Natural killer cell (primary cell): ENCODE measurements at regions of chr15 and their contacts with region 1.

Region 1: DNA sequence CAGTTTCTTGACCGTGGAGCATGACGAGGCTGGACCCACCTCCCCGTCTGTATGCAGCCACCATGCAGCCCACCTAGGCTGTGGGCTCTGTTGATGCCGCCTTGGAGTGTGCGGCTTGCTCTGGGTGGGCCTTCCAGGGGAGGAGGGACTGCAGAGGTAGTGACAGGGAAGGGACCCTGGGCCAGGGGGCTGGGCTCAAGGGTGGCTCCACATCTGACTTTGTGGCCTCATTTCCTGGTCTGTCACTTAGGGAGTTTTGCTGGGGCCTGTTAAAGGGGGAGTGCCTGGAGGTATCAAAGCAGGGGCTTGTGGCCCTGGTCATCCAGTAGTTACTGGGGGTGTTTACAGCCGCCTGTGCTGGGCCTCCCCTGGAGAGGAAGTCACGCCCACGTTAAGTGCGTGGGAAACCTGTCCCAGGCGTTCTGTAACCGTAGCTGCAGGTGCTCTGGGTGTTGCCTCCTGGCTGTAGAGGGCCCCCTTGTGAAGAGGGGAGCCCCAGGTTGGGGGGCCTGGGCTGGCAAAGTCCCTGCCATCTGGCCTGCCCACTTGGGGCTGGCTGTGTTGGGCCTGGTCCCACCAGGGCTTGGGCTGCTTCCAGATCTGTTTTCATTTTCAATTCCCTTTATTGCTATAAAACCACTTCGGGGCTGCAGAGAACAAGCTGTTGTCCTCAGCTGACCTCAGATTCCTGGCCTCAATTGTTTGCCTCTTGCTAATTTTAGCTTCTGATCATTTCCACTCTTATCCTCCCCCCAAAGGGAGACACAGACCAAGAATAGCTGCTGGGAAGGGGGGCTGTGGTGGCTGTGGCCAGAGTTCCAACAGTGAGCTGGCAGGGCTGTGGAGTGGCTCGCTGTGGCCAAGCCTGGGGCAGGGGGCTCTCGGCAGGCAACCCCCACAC is 26.5 kb downstream of the KLF13 start:
- DNase-seq: peak in 1 of 2 donors; percentile 78
- ATAC-seq: peak; percentile 75 to 82 (median 79)
- H3K4me3 ChIP-seq: no peak overlapping the region
- H3K4me3 Mint-ChIP-seq: peak overlapping the region; percentile 79
- H3K27ac ChIP-seq: peak overlapping the region; percentile 88
- H3K27ac Mint-ChIP-seq: peak overlapping the region; percentile 88 to 96
- H3K4me1 ChIP-seq: peaks cover 99% of the 10 kb centered on the region
- H3K4me1 Mint-ChIP-seq: peaks cover 85 to 97% of the 10 kb centered on the region in 2 donors
- H3K27me3 ChIP-seq: no peaks in the 10 kb centered on the region
- H3K27me3 Mint-ChIP-seq: no peaks in the 10 kb centered on the region
- CTCF ChIP-seq: no peak

Region 2: GRCh38 chr15:31338879-31339557 is 14.1 kb before region 1 on chr15:
- intact Hi-C with region 1: loop called (anchors 1 kb)
- DNase-seq: peak in 1 of 2 donors; percentile 55
- ATAC-seq: peak; percentile 32 to 48 (median 41)
- H3K4me3 ChIP-seq: no peak overlapping the region
- H3K4me3 Mint-ChIP-seq: peak overlapping the region; percentile 59
- H3K27ac ChIP-seq: peak overlapping the region; percentile 57
- H3K27ac Mint-ChIP-seq: peak overlapping the region; percentile 88 to 96
- H3K4me1 ChIP-seq: peaks cover 99% of the 10 kb centered on the region
- H3K4me1 Mint-ChIP-seq: peaks cover 90 to 100% of the 10 kb centered on the region in 2 donors
- H3K27me3 ChIP-seq: no peaks in the 10 kb centered on the region
- H3K27me3 Mint-ChIP-seq: no peaks in the 10 kb centered on the region
- CTCF ChIP-seq: no peak